ENCODE measurements at regions of chr16 and their contacts with region 1.

Region 1: GRCh38 chr16:9297437-9298113 is 206.1 kb downstream of the HAPSTR1 start:
- DNase-seq: peak; percentile 63
- ATAC-seq: peak; percentile 79
- H3K4me3 ChIP-seq: no peak overlapping the region
- H3K27ac ChIP-seq: no peak overlapping the region
- H3K4me1 ChIP-seq: no peaks in the 10 kb centered on the region
- H3K27me3 ChIP-seq: 0 out of 5 replicates have a peak, but pooled peaks cover 0 to 1% of the 10 kb centered on the region in 2 experiments
- CTCF ChIP-seq: peak; percentile 97
- EP300 ChIP-seq: no peak
- POLR2A ChIP-seq: no peak
- RAD21 ChIP-seq: peak; percentile 93

Region 2: GRCh38 chr16:9275377-9275776 is 22.2 kb before region 1 on chr16:
- CTCF ChIA-PET with region 1: no interaction called
- POLR2A ChIA-PET with region 1: no interaction called
- in situ Hi-C with region 1: no loop called
- intact Hi-C with region 1: no loop called
- DNase-seq: no peak
- ATAC-seq: no peak
- H3K4me3 ChIP-seq: no peak overlapping the region
- H3K27ac ChIP-seq: no peak overlapping the region
- H3K4me1 ChIP-seq: no peaks in the 10 kb centered on the region
- H3K27me3 ChIP-seq: peaks cover 0 to 9% of the 10 kb centered on the region in 2 experiments; a peak in 1 of 5 replicates
- CTCF ChIP-seq: no peak
- EP300 ChIP-seq: no peak
- POLR2A ChIP-seq: no peak
- RAD21 ChIP-seq: no peak

Region 3: DNA sequence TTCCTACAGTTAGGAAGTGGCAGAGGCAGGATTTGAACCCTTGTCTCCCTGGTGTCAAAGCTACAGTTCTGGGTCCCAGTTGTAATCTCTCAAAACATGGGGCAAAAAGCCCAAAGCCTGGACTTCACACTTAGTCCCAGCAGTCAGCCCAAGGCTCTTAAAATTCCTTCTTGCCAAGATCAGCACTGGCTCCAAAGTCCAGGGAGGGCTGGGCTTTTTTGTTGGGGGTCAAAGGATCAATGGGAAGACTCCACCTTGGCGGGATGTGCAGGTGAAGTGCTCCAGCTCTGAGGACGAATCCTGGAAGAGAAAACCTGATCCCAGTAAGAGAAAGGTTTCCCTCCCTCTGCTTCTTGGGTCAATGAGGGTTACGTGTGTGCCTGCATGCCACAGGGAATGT is 10.6 kb before region 1 on chr16:
- CTCF ChIA-PET with region 1: no interaction called
- POLR2A ChIA-PET with region 1: no interaction called
- in situ Hi-C with region 1: no loop called
- intact Hi-C with region 1: no loop called
- DNase-seq: no peak
- ATAC-seq: no peak
- H3K4me3 ChIP-seq: no peak overlapping the region
- H3K27ac ChIP-seq: no peak overlapping the region
- H3K4me1 ChIP-seq: peaks cover 6% of the 10 kb centered on the region
- H3K27me3 ChIP-seq: no peaks in the 10 kb centered on the region; a peak in 1 of 5 replicates
- CTCF ChIP-seq: no peak
- EP300 ChIP-seq: no peak
- POLR2A ChIP-seq: no peak
- RAD21 ChIP-seq: no peak

Region 4: DNA sequence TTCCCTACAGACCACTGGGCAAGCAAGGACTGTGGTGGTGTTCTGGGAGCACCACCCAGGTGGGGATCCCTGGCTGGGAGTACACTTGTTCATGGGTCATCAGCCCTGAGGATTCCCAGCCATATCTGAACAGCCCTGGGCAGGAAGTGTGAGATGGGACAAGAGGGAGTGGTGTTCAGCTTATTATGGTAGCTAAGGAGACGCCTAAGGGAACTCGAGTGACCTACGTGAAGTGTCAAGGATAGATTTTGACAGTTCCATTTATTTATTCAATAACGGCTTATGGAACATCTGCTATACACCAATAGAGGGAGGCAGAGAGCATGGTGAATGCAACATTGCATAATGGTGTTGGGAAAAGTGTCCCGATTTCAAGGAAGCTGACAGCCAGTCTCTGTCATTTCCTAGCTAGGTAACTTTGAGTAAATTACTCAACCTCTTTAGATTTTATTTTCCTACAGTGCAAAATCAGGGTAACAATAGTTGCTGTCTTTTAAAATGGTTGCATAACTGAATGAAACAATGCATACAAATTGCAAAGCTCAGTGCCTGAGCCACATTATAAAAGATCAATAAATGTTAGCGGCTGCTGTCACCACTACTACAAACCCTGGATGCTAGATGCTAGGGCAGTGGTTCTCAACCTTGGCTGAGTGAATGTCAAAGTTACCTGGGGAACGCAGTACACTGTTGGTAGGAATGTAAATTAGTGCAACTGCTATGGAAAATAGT is 350.6 kb after region 1 on chr16:
- CTCF ChIA-PET with region 1: interaction called, 10 read pairs
- POLR2A ChIA-PET with region 1: no interaction called
- in situ Hi-C with region 1: no loop called
- intact Hi-C with region 1: loop called (anchors 1 kb)
- DNase-seq: peak; percentile 57
- ATAC-seq: peak; percentile 74
- H3K4me3 ChIP-seq: no peak overlapping the region
- H3K27ac ChIP-seq: no peak overlapping the region
- H3K4me1 ChIP-seq: no peaks in the 10 kb centered on the region
- H3K27me3 ChIP-seq: peaks cover 0 to 3% of the 10 kb centered on the region in 2 experiments; a peak in 2 of 5 replicates
- CTCF ChIP-seq: peak; percentile 72
- EP300 ChIP-seq: no peak
- POLR2A ChIP-seq: no peak
- RAD21 ChIP-seq: peak; percentile 59